ENCODE measurements at regions of chr3 and their contacts with region 1.

Region 1: DNA sequence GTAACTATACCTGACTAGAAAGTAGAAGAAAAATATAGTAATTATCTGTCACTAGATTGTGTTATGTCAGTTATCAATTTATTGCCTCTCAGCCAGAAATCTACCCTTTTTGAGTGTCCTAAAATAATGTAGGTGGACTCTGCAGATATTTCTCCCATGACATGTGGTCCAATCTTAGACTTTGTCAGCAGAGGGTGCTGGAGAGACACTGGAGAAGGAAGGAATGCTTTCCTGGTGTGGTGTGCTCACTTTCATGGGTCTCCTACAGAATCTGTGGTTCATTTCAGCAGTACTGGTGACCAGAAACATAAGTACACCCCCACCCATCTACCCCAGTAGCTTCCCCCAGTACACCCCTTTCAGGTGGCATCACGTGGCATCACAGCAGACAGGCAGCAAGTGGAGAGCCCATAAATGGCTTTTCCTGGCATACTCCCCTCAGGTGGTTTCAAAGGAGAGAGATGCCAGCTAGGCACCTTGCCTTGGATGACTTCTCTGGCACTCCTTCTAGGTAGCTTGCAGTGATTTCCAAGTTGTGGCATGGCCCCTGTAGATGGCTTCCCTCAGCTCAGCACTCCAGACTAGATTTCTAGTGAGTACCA is 114.7 kb downstream of the GADL1 start:
- DNase-seq: no peak
- H3K4me3 ChIP-seq: no peak overlapping the region
- H3K27ac ChIP-seq: no peak overlapping the region
- H3K4me1 ChIP-seq: no peaks in the 10 kb centered on the region
- H3K27me3 ChIP-seq: no peaks in the 10 kb centered on the region
- CTCF ChIP-seq: peak in 2 of 7 experiments; percentile 8 to 27
- EP300 ChIP-seq: no peak
- POLR2A ChIP-seq: no peak

Region 2: DNA sequence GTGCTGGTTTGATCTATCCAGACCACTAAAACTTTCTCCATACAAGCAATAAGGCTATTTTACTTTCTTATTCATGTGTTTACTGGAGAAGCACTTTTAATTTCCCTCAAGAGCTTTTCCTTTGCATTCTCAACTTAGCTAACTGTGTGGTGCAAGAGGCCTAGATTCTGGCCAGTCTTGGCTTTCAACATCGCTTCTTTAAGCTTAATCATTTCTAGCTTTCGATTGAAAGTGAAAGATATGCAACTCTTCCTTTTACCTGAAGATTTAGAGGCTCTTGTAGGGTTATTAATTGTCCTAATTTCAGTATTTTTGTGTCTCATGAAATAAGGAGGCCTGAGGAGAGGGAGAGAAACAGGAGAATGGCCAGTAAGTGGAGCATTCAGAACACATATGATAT is 349.5 kb after region 1 on chr3:
- intact Hi-C with region 1: loop called (anchors 5 kb)
- DNase-seq: no peak
- H3K4me3 ChIP-seq: no peak overlapping the region
- H3K27ac ChIP-seq: no peak overlapping the region
- H3K4me1 ChIP-seq: no peaks in the 10 kb centered on the region
- H3K27me3 ChIP-seq: no peaks in the 10 kb centered on the region
- CTCF ChIP-seq: no peak
- EP300 ChIP-seq: no peak
- POLR2A ChIP-seq: no peak